Activated naive CD4-positive, alpha-beta T cell treated with anti-CD3 and anti-CD28 coated beads for 36 hours (primary cell): ENCODE measurements at regions of chr5 and their contacts with region 1.

Region 1: GRCh38 chr5:154610321-154611154 is 132.5 kb upstream of the HAND1 start:
- DNase-seq: peak; percentile 84
- H3K4me3 Mint-ChIP-seq: no peak overlapping the region
- H3K27ac Mint-ChIP-seq: no peak overlapping the region
- H3K4me1 Mint-ChIP-seq: peaks cover 6% of the 10 kb centered on the region
- H3K27me3 Mint-ChIP-seq: peaks cover 53% of the 10 kb centered on the region

Region 2: DNA sequence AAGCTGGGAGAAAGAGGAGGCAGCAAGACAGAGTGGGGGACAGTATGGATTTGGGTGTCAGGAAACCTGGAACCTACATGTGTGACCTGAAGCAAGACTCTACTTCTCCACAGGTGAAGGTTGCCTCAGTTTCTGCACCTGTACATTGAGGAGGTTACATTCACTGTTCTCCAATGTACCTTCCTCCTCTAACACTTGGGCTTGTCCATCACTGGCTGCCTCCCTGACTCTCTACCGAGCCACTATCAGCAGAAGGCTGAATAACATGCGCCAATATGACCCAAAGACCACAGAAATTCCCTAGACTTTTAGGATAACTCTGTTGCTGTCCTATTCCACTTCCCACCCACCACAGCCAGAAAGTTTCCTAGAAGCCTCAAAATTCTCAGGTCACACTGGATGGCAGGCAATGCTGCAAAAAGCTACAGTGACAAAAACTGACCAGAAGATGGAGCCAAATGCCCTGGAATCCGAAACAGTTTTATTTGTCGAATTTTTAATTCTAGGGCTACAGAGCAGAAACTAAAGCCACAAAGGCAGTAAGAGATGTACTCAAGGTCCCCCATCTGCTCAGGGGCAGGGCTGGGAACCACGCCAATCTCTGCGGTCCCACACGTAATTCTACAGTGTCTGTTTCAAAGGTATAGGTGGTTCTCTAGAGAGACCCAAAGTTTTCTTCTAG is 636.3 kb before region 1 on chr5:
- CTCF ChIA-PET with region 1: interaction called, 3 read pairs
- intact Hi-C with region 1: loop called (anchors 1 kb)
- DNase-seq: peak; percentile 58
- H3K4me3 Mint-ChIP-seq: no peak overlapping the region
- H3K27ac Mint-ChIP-seq: no peak overlapping the region
- H3K4me1 Mint-ChIP-seq: no peaks in the 10 kb centered on the region
- H3K27me3 Mint-ChIP-seq: peaks cover 3% of the 10 kb centered on the region

Region 3: DNA sequence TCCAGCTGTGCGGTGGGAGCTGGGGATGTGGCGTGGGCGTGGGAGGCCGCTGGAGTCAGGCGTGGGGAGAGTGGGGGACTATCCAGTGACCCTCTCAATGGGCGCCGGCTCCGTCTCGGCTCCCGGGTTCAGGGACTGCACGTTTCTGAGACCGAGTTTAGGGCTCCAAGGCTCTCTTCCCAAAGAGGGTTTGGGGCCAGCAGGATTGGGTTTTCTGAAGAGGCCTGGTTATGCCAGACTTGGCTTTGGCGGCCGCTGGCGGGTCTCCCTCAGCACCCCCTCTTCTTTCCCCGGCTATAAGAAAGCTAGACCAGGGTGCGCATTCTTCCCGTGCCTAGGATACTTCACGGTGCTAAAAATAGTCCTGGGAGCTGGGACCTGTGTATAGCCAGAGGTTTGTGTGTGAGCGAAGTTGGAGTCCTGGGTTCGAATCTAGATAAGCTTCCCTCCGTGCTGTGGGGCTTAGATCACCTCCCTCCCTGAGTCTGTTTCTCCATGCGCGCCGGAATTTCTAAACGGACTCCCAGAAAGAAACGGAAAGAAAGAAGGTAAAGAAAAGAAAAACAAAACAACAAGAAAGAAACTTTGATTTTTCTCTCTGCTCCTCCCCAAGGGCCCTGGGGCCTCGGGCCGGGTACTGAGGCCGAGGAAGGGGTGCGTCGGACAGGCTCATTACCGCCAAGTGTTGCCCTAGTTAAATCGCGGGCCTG is 137.5 kb before region 1 on chr5:
- CTCF ChIA-PET with region 1: interaction called, 60 read pairs
- intact Hi-C with region 1: no loop called
- DNase-seq: no peak
- H3K4me3 Mint-ChIP-seq: peak overlapping the region; percentile 18
- H3K27ac Mint-ChIP-seq: no peak overlapping the region
- H3K4me1 Mint-ChIP-seq: peaks cover 49% of the 10 kb centered on the region
- H3K27me3 Mint-ChIP-seq: peaks cover 80% of the 10 kb centered on the region

Region 4: DNA sequence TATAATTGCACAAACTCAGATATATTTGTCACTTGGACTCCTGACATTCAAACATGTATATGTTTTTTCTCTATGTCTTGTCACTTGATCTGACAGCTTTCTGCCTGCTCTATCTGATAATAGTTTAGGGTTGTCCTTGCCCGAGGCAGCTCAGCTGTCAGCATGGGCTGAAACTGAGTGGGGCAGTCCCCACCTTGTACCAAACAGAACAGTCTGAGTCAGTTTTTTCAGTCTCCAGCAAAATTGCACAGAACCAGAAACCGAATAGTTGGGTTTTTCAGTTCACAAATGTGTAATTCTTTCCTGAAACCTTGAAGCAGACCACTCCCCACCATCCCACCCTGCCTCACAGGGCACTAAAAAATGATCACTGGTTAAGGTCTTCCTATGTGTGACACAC is 123.0 kb before region 1 on chr5:
- CTCF ChIA-PET with region 1: no interaction called
- intact Hi-C with region 1: loop called (anchors 5 kb)
- DNase-seq: peak; percentile 71
- H3K4me3 Mint-ChIP-seq: no peak overlapping the region
- H3K27ac Mint-ChIP-seq: no peak overlapping the region
- H3K4me1 Mint-ChIP-seq: peaks cover 39% of the 10 kb centered on the region
- H3K27me3 Mint-ChIP-seq: peaks cover 76% of the 10 kb centered on the region

Region 5: GRCh38 chr5:154513669-154514084 is 96.9 kb before region 1 on chr5:
- CTCF ChIA-PET with region 1: no interaction called
- intact Hi-C with region 1: loop called (anchors 1 kb)
- DNase-seq: peak; percentile 66
- H3K4me3 Mint-ChIP-seq: no peak overlapping the region
- H3K27ac Mint-ChIP-seq: no peak overlapping the region
- H3K4me1 Mint-ChIP-seq: peaks cover 19% of the 10 kb centered on the region
- H3K27me3 Mint-ChIP-seq: peaks cover 35% of the 10 kb centered on the region